Calu3 (cell line): ENCODE measurements at regions of chr18 and their contacts with region 1.

Region 1: DNA sequence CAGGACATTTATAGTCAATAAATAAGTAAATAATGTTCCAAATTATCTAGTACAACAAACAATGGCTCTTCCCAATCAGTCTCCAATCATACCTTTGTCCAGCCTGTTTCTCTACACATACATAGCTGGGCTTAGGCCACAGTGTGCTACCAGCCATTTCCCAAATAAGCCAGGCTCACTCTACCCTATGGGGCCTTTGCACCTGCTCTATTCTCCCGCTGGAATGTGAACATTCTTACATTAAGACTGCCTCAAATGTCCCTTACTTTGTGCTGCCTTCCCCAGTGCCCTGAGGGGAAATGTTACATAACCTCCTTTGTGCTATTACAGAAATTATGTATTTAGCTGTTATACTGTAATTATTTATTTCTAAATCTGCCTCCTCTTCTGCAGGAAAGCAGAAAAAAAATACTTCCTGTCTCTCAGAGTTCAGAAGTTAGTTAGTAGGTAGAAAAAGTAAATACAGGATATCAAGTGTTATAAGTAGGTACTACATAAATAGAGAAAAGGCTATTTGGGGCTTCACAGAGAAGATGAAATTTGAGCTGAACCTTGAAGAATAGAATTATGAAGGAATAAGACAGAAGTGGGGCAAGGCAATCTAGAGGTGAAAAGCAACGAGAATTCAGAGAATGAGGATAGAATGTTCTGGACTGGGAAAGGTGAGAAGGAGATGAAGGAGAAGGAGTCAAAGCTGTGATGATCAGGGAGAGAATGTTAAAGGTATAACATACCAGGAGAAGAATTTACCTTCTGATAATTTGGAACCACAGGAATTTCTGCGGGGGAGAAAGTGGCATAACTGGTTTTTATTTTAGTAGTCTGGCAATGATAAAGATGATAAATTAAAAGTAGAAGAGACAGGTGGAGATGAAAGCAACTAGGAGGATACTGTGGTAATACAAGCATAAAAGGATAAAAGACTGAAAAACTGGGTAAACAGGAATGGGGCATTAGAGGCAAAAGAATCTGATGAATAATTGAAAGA is 37.0 kb downstream of the ROCK1 start:
- DNase-seq: peak; percentile 25
- H3K4me3 Mint-ChIP-seq: peak overlapping the region; percentile 27
- H3K27ac Mint-ChIP-seq: peak overlapping the region; percentile 53
- H3K4me1 Mint-ChIP-seq: peaks cover 58% of the 10 kb centered on the region
- H3K27me3 Mint-ChIP-seq: no peaks in the 10 kb centered on the region
- CTCF ChIP-seq: no peak

Region 2: DNA sequence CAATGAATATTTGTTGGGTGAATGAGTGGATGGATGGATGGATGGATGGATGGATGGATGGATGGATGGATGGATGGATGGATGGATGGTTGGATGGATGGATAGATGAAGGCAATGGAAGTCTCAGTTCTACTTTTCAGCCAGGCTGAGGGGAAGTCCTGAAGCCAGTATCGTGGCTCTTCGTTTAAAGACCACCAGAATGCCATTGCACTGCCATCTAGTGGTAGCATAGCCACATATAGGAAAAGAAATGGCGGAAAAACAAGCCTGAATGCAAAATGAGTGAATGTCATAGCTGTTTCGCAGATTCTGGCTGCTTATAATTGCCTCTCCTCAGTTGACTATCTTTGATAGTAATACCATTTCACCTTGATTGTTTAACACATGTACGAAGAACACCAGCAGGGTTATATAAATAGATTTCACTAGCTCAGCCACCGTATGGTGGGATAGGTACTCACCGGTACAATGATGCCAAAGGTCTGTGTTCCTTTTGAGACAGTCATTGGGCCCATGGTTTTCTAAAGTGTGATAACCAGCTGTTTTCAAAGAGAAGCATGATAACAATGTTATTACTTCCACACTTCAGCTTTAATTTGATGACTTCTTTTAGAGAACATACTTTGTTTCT is 105.1 kb after region 1 on chr18:
- CTCF ChIA-PET with region 1: no interaction called
- intact Hi-C with region 1: loop called (anchors 5 kb)
- DNase-seq: peak; percentile 56
- H3K4me3 Mint-ChIP-seq: no peak overlapping the region
- H3K27ac Mint-ChIP-seq: no peak overlapping the region
- H3K4me1 Mint-ChIP-seq: peaks cover 10% of the 10 kb centered on the region
- H3K27me3 Mint-ChIP-seq: peaks cover 13% of the 10 kb centered on the region
- CTCF ChIP-seq: peak; percentile 74

Region 3: DNA sequence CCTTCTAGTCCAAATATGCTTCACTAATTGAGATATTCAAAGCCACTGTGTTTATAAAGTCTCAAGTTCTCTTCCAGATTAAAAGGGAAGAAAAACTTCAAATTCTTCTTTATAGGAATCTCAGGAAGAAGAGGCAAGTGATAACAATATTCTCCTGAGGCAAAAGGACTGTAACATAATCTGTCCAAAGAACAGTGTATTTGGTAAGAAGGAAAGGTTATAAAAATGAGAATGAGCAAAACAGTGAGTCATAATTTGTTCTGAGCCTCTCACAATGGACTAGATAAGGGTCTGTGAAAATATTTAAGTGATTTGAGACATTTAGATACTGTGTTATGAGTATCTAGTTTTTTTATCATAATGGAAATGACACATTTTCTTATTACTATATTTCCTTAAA is 581.8 kb after region 1 on chr18:
- CTCF ChIA-PET with region 1: no interaction called
- intact Hi-C with region 1: no loop called
- DNase-seq: no peak
- H3K4me3 Mint-ChIP-seq: no peak overlapping the region
- H3K27ac Mint-ChIP-seq: no peak overlapping the region
- H3K4me1 Mint-ChIP-seq: no peaks in the 10 kb centered on the region
- H3K27me3 Mint-ChIP-seq: no peaks in the 10 kb centered on the region
- CTCF ChIP-seq: no peak